ENCODE measurements at regions of chr7 and their contacts with region 1.

Region 1: DNA sequence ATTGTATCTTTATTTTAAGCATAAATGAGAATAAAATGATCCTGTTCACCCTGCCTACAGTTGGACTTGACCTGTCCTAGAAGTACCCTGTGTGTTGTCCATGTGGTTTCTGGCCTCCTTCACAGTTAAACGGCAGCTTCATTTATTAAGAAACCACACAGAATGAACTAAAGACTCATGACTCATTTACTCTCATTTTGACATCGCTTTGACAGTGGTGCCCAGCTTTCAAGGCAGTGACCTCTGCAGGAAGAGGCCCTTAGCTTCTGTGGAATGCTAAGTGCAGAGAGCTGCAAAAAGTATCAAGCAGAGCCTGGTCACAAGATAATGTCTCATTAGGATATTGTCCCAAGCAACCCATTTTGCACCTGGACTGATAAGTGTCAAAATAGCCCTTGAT is 93.4 kb downstream of the AVL9 start:
- DNase-seq: no peak
- H3K4me3 Mint-ChIP-seq: peak overlapping the region; percentile 30
- H3K27ac Mint-ChIP-seq: peak overlapping the region; percentile 71
- H3K4me1 Mint-ChIP-seq: peaks cover 26% of the 10 kb centered on the region
- H3K27me3 Mint-ChIP-seq: no peaks in the 10 kb centered on the region

Region 2: GRCh38 chr7:32495298-32496176 is 93.1 kb before region 1 on chr7 and contains the start of gene AVL9:
- intact Hi-C with region 1: loop called (anchors 1 kb)
- DNase-seq: peak; percentile 99
- H3K4me3 Mint-ChIP-seq: peak within 1 kb of the TSS; percentile 93
- H3K27ac Mint-ChIP-seq: peak within 1 kb of the TSS; percentile 98
- H3K4me1 Mint-ChIP-seq: peaks cover 32% of the 10 kb centered on the region
- H3K27me3 Mint-ChIP-seq: no peaks in the 10 kb centered on the region
- total RNA-seq, gene AVL9: 46.7 and 50.6 TPM in 2 replicates

Region 3: GRCh38 chr7:32569388-32570289 is 19.0 kb before region 1 on chr7:
- intact Hi-C with region 1: no loop called
- DNase-seq: no peak
- H3K4me3 Mint-ChIP-seq: no peak overlapping the region
- H3K27ac Mint-ChIP-seq: no peak overlapping the region
- H3K4me1 Mint-ChIP-seq: no peaks in the 10 kb centered on the region
- H3K27me3 Mint-ChIP-seq: no peaks in the 10 kb centered on the region

Region 4: GRCh38 chr7:32616625-32617024 is 28.0 kb after region 1 on chr7:
- intact Hi-C with region 1: no loop called
- DNase-seq: no peak
- H3K4me3 Mint-ChIP-seq: no peak overlapping the region
- H3K27ac Mint-ChIP-seq: no peak overlapping the region
- H3K4me1 Mint-ChIP-seq: no peaks in the 10 kb centered on the region
- H3K27me3 Mint-ChIP-seq: peaks cover 7% of the 10 kb centered on the region